A549 (cell line): ENCODE measurements at regions of chr17 and their contacts with region 1.

Region 1: DNA sequence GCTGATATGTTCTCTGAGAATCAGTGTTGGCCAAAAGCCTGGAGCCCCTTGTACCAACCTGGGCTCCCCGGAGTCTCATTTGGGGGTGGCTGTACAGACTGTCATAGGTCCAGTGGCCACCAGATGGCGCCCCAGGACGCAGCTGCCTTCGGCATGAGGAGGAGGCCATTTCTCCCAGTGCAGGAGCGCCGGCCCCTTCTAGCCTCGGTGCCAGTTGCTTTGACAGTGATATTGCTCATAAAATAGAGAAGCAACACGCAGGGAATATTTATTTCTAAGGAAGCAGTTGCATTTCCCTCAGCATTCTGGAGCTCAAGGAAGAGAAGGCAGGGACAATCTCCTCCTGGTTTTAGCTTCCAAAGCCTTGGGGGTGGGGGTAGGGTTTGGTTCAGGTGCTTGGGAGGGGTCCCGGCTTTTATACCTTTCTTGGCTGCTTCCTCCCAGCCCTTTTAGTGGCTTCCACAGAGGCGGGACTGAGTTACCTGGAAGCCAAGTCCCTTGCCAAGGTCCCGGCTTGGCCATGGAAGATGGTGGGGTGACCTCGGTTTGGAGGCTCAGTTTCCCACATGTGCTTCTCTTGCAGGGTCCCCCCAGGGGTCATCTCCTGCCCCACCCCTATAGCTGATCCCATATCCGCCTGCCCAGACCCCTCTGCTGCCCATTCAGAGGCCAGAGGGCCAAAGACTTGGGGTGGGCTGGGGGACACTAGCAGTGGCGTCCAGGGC is 117.8 kb upstream of the CDC42EP4 start:
- DNase-seq: peak; percentile 77 to 97
- ATAC-seq: peak; percentile 87 to 97
- H3K4me3 ChIP-seq: no peak overlapping the region
- H3K27ac ChIP-seq: no peak overlapping the region
- H3K4me1 ChIP-seq: peaks cover 3% of the 10 kb centered on the region; the same call in 1 of the 3 replicates
- CTCF ChIP-seq: peak; percentile 98
- EP300 ChIP-seq: no peak
- POLR2A ChIP-seq: no peak
- RAD21 ChIP-seq: peak; percentile 95 to 96

Region 2: DNA sequence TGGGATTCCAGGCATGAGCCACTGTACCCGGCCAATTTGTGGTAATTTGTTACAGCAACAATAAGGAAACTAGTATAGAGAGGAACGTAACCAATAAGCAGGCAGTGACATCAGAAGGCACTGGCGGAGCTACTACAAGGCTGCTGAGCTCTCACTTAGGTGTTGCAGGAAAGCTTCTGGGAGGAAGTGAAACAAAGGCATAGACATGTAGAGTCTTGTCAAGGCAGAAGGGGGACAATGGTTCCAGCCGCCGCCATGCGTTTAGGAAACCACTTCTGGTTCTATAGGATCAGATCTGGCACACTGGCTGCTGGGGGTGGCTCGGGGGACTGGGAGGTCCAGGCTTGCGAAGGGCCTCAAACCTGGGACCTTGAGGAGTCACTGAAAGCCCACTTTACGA is 158.5 kb before region 1 on chr17:
- CTCF ChIA-PET with region 1: no interaction called
- POLR2A ChIA-PET with region 1: no interaction called
- DNase-seq: no peak
- ATAC-seq: no peak
- H3K4me3 ChIP-seq: no peak overlapping the region
- H3K27ac ChIP-seq: no peak overlapping the region
- H3K4me1 ChIP-seq: no peaks in the 10 kb centered on the region
- CTCF ChIP-seq: no peak
- EP300 ChIP-seq: no peak
- POLR2A ChIP-seq: no peak
- RAD21 ChIP-seq: no peak

Region 3: DNA sequence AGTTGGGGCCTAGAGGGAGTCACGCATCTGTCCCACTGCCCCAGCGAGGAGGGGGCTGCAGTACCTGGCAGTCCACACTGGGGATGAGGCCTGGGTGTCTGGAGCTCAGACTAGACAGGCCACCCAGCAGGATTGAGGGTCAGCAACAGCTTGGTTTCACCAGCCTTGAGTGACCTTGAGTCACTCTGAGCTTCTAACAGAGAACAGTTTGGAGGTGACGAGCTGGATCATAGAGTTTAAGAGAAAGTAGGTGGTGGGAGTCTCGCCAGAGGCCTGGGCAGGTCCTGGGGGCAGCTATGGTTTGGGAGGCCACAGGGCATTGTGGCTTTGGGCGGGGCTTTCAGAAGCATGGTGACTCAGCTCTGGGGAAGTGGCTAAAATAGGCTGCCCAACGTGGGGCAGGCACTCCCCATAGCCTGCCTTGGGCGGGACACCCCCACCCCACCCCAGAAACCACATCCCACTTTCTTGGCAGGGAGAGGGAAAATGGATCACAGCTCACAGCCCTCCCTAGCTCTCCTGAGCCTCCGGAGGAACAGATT is 138.3 kb before region 1 on chr17:
- CTCF ChIA-PET with region 1: no interaction called
- POLR2A ChIA-PET with region 1: no interaction called
- DNase-seq: peak; percentile 59 to 65
- ATAC-seq: peak; percentile 47 to 65; a peak in 5 of 6 replicates
- H3K4me3 ChIP-seq: 0 out of 3 replicates have a peak overlapping the region, but pooled peaks have one; percentile 6
- H3K27ac ChIP-seq: peak overlapping the region; percentile 82 to 91
- H3K4me1 ChIP-seq: peaks cover 87% of the 10 kb centered on the region
- CTCF ChIP-seq: no peak
- EP300 ChIP-seq: no peak
- POLR2A ChIP-seq: no peak
- RAD21 ChIP-seq: no peak

Region 4: DNA sequence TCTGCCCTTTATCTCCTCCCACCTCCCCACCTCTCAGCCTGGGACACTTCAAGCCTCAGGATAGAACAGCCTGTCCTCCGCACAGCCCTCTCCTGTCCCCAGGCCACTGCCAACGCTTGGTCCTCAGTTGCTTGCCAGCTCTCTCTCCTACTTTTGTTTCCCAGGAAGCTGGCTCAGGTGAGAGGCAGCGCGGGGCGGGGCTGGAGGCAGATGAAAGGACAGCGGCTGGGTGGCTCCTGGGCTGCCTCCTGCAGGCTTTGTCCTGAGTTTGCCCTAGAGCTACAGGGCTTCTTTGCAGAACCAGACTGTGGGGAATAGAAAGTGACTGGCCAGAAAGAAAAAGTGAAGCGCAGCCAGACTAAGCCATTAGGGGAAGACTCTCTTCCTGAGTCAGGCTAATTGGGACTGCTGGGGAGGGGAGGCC is 69.6 kb before region 1 on chr17:
- CTCF ChIA-PET with region 1: no interaction called
- POLR2A ChIA-PET with region 1: no interaction called
- DNase-seq: no peak
- ATAC-seq: peak; percentile 16 to 18; a peak in 3 of 6 replicates
- H3K4me3 ChIP-seq: no peak overlapping the region
- H3K27ac ChIP-seq: peak overlapping the region in 1 of 2 experiments; percentile 1; a peak in 4 of 6 replicates
- H3K4me1 ChIP-seq: peaks cover 28% of the 10 kb centered on the region
- CTCF ChIP-seq: no peak
- EP300 ChIP-seq: no peak
- POLR2A ChIP-seq: no peak
- RAD21 ChIP-seq: no peak

Region 5: DNA sequence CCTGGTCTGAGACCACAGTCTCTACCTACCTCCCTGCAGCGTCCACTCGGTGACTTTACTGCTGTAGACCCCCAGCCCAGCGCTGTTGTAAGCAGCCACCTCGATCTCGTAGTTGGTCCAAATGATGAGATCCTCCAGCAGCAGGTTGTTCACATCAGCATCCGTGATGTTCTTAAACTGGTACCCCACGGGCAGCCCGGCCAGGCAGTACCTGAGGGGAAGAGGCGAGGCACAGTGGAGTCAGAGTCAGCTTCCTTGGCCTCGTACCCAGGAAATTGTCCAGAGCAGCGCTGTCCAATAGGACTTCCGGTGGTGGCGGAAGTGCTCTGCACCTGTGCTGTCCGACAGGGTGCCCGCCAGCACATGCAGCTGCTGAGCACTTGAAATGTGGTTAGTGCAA is 13.8 kb before region 1 on chr17:
- CTCF ChIA-PET with region 1: interaction called, 28 read pairs
- POLR2A ChIA-PET with region 1: no interaction called
- DNase-seq: no peak
- ATAC-seq: no peak
- H3K4me3 ChIP-seq: no peak overlapping the region
- H3K27ac ChIP-seq: no peak overlapping the region
- H3K4me1 ChIP-seq: no peaks in the 10 kb centered on the region
- CTCF ChIP-seq: no peak
- EP300 ChIP-seq: no peak
- POLR2A ChIP-seq: no peak
- RAD21 ChIP-seq: no peak

Region 6: GRCh38 chr17:73508057-73508930 is 78.7 kb after region 1 on chr17:
- CTCF ChIA-PET with region 1: interaction called, 11 read pairs
- POLR2A ChIA-PET with region 1: no interaction called
- DNase-seq: no peak
- ATAC-seq: no peak
- H3K4me3 ChIP-seq: no peak overlapping the region
- H3K27ac ChIP-seq: no peak overlapping the region
- H3K4me1 ChIP-seq: no peaks in the 10 kb centered on the region
- CTCF ChIP-seq: no peak
- EP300 ChIP-seq: no peak
- POLR2A ChIP-seq: no peak
- RAD21 ChIP-seq: no peak

Region 7: GRCh38 chr17:73710095-73710592 is 280.5 kb after region 1 on chr17:
- CTCF ChIA-PET with region 1: interaction called, 10 read pairs
- POLR2A ChIA-PET with region 1: no interaction called
- DNase-seq: peak; percentile 70 to 79
- ATAC-seq: peak; percentile 59 to 90; a peak in 4 of 6 replicates
- H3K4me3 ChIP-seq: no peak overlapping the region
- H3K27ac ChIP-seq: peak overlapping the region in 1 of 2 experiments; percentile 30; a peak in 1 of 6 replicates
- H3K4me1 ChIP-seq: peaks cover 4% of the 10 kb centered on the region; the same call in 2 of the 3 replicates
- CTCF ChIP-seq: peak; percentile 77
- EP300 ChIP-seq: no peak
- POLR2A ChIP-seq: no peak
- RAD21 ChIP-seq: peak; percentile 72 to 84

Region 8: DNA sequence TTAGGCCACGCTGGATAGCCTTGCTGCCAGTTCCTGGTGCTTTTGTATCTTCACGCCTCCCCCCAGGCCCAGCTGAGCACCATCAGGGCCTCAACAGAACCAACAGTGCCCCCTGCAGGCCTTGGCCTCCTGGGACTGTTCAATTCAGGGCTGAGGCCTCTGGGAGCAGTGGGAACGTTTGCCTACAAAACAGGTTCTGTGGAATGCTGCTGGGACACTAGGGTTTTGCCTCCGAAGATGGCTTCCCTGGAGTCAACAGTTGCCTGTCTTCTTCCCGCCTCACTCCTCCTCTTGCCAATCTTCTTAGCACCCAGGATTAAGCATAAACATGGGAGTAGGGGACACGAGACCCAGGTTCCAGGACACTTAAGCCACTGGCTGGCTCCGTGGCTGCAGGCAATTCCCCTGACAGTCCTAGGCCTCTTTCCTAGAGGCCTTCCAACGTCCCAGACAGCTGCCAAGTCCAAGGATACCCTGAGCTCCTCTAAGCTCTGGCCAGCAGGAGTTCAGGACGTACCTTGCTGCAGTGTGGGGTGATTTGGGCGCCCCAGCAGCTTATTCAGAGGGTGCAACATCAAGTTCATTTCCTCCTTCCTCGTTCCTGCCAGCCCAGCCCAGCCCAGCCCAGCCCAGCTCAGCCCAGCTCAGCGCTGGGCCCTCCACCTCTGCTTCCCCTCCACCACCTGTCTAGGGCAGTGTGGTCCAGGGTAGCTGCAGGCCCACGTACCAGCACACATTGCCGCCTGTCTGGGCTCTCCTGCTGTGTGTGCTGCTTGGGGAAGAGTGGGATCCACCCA is 527.3 kb after region 1 on chr17:
- CTCF ChIA-PET with region 1: interaction called, 24 read pairs
- POLR2A ChIA-PET with region 1: no interaction called
- DNase-seq: peak; percentile 78 to 88
- ATAC-seq: peak; percentile 75 to 91
- H3K4me3 ChIP-seq: no peak overlapping the region
- H3K27ac ChIP-seq: no peak overlapping the region; a peak in 1 of 6 replicates
- H3K4me1 ChIP-seq: peaks cover 4% of the 10 kb centered on the region; the same call in 1 of the 3 replicates
- CTCF ChIP-seq: peak; percentile 72
- EP300 ChIP-seq: no peak
- POLR2A ChIP-seq: no peak
- RAD21 ChIP-seq: peak; percentile 88 to 91

Region 9: DNA sequence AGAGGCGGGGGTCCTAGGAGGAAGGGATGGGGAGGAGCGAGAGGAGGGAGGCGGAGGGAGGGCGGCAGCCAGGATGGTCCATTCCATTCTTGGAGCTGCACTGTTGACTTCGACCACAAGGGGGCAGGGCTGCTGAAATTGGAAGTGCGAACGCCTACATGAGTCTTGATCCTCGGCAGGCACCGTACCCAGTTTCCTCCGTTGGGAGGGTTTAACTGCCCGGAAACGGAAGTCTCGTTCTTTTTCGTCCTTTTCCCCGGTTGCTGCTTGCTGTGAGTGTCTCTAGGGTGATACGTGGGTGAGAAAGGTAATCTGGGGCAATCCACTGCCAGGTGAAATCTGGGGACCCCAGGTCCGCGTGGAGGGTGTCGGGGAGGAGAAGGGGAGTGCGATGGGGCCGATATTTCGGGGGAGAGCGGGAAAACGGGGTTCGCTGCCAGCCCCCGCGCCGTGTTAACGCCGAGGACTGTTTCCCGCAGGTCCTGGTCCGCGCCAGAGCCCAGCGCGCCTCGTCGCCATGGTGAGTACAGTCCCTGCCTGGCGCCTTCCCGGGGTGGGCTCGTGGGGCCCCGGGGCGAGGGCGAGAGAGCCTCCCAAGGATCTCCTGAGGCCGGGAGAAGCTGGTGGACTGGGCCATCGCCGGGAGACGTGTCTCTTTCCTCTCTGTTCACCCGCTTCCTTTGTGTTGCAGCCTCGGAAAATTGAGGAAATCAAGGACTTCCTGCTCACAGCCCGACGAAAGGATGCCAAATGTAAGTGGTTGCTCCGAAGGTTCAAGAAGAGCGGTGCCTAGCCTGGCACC is 774.0 kb after region 1 on chr17 and contains the start of gene RPL38:
- CTCF ChIA-PET with region 1: interaction called, 29 read pairs
- POLR2A ChIA-PET with region 1: interaction called, 3 read pairs
- DNase-seq: peak; percentile 95 to 98
- ATAC-seq: peak; percentile 59 to 77
- H3K4me3 ChIP-seq: peak within 1 kb of the TSS; percentile 71
- H3K27ac ChIP-seq: peak within 1 kb of the TSS; percentile 89 to 97
- H3K4me1 ChIP-seq: peaks cover 41% of the 10 kb centered on the region
- CTCF ChIP-seq: peak; percentile 95
- EP300 ChIP-seq: peak in 1 of 2 experiments; percentile 27; a peak in 1 of 5 replicates
- POLR2A ChIP-seq: peak; percentile 96
- RAD21 ChIP-seq: peak in 1 of 2 experiments; percentile 43; a peak in 3 of 5 replicates
- polyA plus RNA-seq, gene RPL38: 2,364 and 3,205 TPM in 2 replicates